BJ (cell line): ENCODE measurements at regions of chr5 and their contacts with region 1.

Region 1: DNA sequence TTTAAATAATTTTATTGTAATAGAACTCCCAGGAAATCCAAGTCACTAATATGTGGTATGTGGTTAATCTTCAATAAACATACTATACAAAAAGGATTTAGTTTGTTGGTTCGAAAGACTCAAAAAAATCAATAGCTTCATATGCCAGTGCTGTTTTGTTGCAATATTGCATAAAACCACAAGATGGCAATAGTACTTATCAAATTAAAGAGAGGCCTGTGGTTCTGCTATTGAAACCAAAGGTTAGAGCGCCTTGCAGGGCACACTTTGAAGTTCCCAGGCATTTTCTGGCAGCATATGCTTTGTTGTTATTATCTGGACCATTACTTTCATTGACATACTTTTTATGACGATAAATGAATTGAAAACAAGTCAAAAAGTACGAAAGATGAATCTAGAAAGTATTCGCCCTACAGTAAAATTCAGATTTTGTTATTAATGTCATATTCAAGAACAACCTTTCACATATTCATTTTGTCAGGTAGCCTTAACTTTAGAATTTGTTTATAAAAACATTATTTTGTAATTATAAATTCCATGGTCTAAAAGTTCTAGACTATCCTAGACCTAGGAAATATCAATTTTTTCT is 316.3 kb downstream of the MCTP1 start:
- DNase-seq: peak; percentile 11
- H3K4me3 ChIP-seq: no peak overlapping the region
- H3K27me3 ChIP-seq: no peaks in the 10 kb centered on the region
- CTCF ChIP-seq: peak; percentile 69

Region 2: GRCh38 chr5:95134326-95134725 is 165.7 kb after region 1 on chr5:
- CTCF ChIA-PET with region 1: no interaction called
- POLR2A ChIA-PET with region 1: no interaction called
- DNase-seq: no peak
- H3K4me3 ChIP-seq: no peak overlapping the region
- H3K27me3 ChIP-seq: no peaks in the 10 kb centered on the region
- CTCF ChIP-seq: no peak

Region 3: DNA sequence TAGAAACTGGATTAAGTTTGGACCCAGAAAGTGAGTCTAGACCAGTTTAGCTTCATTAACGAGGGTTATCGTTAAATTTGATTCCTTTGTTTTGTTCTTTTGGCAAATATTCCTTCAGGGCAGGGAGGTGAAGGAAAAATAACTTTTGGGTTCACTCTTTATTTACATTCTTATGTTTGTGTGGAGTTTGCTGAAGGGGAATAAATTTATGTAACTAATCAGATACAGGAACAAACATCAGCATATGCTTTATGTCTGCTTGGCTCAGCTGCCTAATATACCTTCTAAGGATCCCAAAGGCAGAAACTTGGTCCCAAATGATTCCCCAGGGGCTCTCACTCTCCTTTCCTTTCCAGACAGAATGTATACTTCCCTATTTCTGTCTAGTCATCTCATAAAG is 183.9 kb after region 1 on chr5:
- CTCF ChIA-PET with region 1: no interaction called
- POLR2A ChIA-PET with region 1: no interaction called
- DNase-seq: no peak
- H3K4me3 ChIP-seq: no peak overlapping the region
- H3K27me3 ChIP-seq: no peaks in the 10 kb centered on the region
- CTCF ChIP-seq: no peak

Region 4: DNA sequence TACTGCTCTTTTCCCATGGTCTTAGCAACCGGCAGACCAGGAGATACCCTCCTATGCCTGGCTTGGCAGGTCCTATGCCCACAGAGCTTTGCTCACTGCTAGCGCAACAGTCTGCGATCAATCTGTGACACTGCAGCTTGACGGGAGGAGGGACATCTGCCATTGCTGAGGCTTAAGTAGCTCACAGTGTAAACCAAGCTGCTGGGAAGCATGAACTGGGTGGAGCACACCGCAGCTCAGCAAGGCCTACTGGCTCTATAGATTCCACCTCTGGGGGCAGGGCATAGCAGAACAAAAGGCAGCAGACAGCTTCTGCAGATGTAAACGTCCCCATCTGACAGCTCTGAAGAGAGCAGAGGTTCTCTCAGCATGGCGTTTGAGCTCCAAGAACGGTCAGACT is 275.9 kb after region 1 on chr5:
- CTCF ChIA-PET with region 1: no interaction called
- POLR2A ChIA-PET with region 1: no interaction called
- DNase-seq: no peak
- H3K4me3 ChIP-seq: no peak overlapping the region
- H3K27me3 ChIP-seq: no peaks in the 10 kb centered on the region
- CTCF ChIP-seq: no peak

Region 5: DNA sequence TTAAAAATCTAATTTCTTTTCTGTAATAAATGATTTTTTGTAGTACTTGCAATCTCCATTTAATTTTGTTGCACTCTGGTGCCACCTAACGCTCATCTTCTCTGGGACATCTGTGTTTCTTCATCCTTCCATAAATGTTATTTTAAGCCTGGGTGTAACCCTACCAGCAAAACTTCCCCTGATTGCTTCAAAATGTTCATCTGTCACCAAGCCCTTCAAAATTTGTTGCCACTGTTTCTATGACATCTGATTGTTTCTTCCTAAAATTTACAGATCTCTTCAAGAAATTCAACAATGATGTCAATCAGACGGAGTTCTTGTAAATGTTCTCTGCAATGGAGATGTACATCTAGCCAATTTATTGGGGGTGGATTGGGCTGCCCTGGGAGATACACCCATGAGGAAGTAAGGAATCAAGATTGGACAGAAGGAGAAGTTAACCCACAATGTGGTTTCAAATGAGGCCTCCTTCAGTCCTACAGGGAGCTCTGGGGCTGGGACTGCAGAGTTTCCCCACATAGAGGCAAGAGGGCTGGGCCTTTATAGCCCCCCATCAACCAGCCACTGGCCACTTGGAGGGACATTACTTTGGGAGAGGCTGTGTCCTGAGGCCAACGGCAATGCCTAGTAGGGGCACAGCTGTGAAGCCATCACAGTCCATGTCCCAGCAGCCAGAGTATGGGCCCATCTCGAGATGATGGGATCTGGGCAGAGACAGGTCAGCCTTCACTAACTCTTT is 293.0 kb after region 1 on chr5:
- CTCF ChIA-PET with region 1: interaction called, 11 read pairs
- POLR2A ChIA-PET with region 1: no interaction called
- DNase-seq: peak; percentile 4
- H3K4me3 ChIP-seq: no peak overlapping the region
- H3K27me3 ChIP-seq: no peaks in the 10 kb centered on the region
- CTCF ChIP-seq: peak; percentile 55